H1 (cell line): ENCODE measurements at regions of chr19 and their contacts with region 1.

Region 1: GRCh38 chr19:35352448-35353304 is 5.0 kb downstream of the FFAR1 start:
- DNase-seq: peak; percentile 33 to 77
- H3K4me3 ChIP-seq: no peak overlapping the region
- H3K27ac ChIP-seq: no peak overlapping the region
- H3K4me1 ChIP-seq: peaks cover 0 to 2% (median 0%) of the 10 kb centered on the region in 4 experiments; a peak in 2 of 7 replicates
- H3K27me3 ChIP-seq: no peaks in the 10 kb centered on the region
- CTCF ChIP-seq: peak; percentile 77 to 95 (median 93)
- EP300 ChIP-seq: no peak
- POLR2A ChIP-seq: no peak
- RAD21 ChIP-seq: peak; percentile 92 to 95

Region 2: GRCh38 chr19:35262101-35262761 is 90.4 kb before region 1 on chr19:
- CTCF ChIA-PET with region 1: interaction called, 12 read pairs
- POLR2A ChIA-PET with region 1: no interaction called
- DNase-seq: no peak
- H3K4me3 ChIP-seq: no peak overlapping the region
- H3K27ac ChIP-seq: no peak overlapping the region
- H3K4me1 ChIP-seq: peaks cover 0 to 9% (median 4%) of the 10 kb centered on the region in 4 experiments; a peak in 5 of 7 replicates
- H3K27me3 ChIP-seq: no peaks in the 10 kb centered on the region
- CTCF ChIP-seq: no peak
- EP300 ChIP-seq: no peak
- POLR2A ChIP-seq: no peak; a peak in 1 of 3 replicates
- RAD21 ChIP-seq: no peak

Region 3: DNA sequence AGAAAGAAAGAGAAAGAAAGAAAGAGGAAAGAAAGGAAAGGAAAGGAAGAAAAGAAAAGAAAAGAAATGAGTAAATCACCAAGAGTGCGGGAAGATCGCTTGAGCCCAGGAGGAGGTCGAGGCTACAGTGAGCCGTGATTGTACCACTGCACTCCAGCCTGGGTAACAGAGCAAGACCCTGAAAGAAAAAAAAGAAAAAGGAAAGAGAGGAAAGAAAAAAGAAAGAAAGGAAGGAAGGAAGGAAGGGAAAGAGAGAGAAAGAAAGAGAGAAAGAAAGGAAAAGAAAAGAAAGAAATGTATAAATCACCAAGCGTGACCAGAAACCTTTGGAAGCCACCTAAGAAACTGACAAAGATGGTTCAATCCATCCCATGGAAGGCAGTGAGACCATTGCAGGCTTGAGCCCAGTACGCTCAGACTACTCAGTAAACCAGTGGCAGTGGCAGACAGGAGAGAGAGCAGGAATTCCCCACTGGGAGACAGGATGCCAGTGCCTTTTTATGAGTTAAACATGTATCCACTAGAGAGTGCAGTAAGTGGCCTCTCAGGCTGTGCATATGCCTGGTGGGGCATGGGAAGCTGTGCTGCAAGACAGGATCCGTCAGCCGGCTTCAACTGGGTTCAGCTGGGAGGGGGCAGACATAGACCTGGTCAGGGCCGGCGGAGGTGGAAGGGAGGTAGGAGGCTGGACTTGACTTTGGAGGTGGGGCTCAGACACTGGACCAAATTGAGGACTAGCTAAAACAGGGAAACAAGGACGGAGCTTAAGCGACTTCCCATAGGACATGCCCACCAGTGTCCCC is 23.0 kb after region 1 on chr19:
- CTCF ChIA-PET with region 1: interaction called, 16 read pairs
- POLR2A ChIA-PET with region 1: no interaction called
- DNase-seq: no peak
- H3K4me3 ChIP-seq: no peak overlapping the region
- H3K27ac ChIP-seq: no peak overlapping the region
- H3K4me1 ChIP-seq: no peaks in the 10 kb centered on the region
- H3K27me3 ChIP-seq: peaks cover 0 to 2% (median 0%) of the 10 kb centered on the region in 4 experiments; a peak in 1 of 7 replicates
- CTCF ChIP-seq: no peak
- EP300 ChIP-seq: no peak
- POLR2A ChIP-seq: no peak
- RAD21 ChIP-seq: no peak

Region 4: GRCh38 chr19:35414442-35414841 is 61.8 kb after region 1 on chr19:
- CTCF ChIA-PET with region 1: no interaction called
- POLR2A ChIA-PET with region 1: no interaction called
- DNase-seq: no peak
- H3K4me3 ChIP-seq: no peak overlapping the region
- H3K27ac ChIP-seq: no peak overlapping the region
- H3K4me1 ChIP-seq: no peaks in the 10 kb centered on the region
- H3K27me3 ChIP-seq: no peaks in the 10 kb centered on the region
- CTCF ChIP-seq: no peak
- EP300 ChIP-seq: no peak
- POLR2A ChIP-seq: no peak
- RAD21 ChIP-seq: no peak

Region 5: DNA sequence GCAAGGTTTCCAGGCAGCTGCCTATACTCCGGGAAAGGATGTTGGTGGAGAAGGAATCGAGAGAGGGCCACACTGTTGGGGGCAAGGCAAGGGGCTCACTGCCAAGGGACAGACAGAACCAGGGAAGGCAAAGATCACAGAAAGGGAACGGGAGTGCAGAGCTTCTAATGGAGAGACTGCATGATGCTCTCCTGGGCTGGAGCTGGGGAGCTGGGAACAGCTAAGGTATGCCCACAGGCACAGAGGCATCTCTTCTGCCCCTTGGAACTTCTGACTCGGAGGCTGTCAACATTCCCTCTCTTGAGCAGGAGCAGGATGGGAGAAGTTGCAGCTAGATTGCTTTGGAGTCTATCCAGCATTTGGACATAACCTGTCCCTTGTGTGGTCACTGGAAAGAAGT is 73.0 kb after region 1 on chr19:
- CTCF ChIA-PET with region 1: interaction called, 12 read pairs
- POLR2A ChIA-PET with region 1: no interaction called
- DNase-seq: no peak
- H3K4me3 ChIP-seq: no peak overlapping the region
- H3K27ac ChIP-seq: no peak overlapping the region
- H3K4me1 ChIP-seq: no peaks in the 10 kb centered on the region
- H3K27me3 ChIP-seq: no peaks in the 10 kb centered on the region
- CTCF ChIP-seq: no peak
- EP300 ChIP-seq: no peak
- POLR2A ChIP-seq: no peak
- RAD21 ChIP-seq: no peak

Region 6: DNA sequence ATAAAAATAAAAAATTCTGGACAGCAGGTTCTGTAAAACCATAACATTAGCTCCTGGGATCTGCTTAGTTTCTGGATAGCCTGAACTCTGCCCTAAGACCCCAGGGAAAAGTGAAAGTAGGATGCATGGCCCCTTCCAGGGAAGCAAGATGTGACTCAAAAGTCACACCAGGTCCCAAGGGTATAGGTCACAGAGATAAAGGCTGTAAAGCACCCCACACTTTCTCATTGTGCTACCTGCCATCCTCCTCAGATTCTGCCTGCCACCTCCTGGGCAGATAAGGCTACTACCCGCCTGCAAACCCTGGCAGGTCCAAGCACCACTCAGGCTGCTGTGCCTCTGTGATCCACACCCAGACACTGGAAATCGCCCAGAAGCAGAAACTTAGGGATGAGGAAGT is 116.0 kb after region 1 on chr19:
- CTCF ChIA-PET with region 1: interaction called, 51 read pairs
- POLR2A ChIA-PET with region 1: interaction called, 3 read pairs
- DNase-seq: no peak
- H3K4me3 ChIP-seq: no peak overlapping the region
- H3K27ac ChIP-seq: no peak overlapping the region
- H3K4me1 ChIP-seq: no peaks in the 10 kb centered on the region
- H3K27me3 ChIP-seq: no peaks in the 10 kb centered on the region
- CTCF ChIP-seq: peak; percentile 83 to 84 (median 84)
- EP300 ChIP-seq: no peak
- POLR2A ChIP-seq: no peak
- RAD21 ChIP-seq: peak; percentile 80 to 88

Region 7: DNA sequence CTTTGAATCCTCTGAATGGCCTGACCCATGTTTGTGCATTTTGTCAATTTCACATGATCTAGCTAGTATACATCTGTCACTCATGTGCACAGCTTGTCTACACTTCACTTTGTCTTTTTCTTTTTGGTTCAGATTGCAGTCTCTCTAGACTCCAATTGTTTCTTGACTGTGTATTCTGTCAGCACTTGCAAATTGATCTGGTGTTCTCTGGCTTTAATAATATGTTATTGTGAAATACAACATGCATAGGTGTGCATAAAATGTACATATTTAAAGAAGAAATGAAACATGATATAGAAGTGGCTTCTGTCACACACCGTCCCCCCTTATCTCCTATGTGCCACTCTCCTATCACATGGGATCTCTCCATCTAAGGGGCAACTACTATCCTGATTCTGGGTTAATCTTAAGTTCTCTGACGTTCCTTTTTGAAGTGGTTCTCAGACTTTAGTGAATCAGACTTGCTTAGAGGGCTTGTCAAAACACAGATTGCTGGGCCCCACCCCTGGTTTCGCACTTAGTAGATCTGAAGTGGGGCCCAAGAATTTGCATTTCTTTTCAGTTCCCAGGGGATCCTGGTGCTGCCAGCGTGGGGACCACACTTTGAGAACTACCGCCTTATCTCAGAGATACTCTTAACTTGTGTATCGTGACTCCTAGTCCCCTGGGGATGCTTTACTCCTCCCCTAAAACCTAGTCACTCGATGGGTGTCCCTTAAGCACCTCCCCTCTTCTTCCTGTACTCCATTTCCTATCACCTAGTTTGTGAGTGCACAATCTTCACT is 131.8 kb after region 1 on chr19:
- CTCF ChIA-PET with region 1: interaction called, 22 read pairs
- POLR2A ChIA-PET with region 1: interaction called, 3 read pairs
- DNase-seq: no peak
- H3K4me3 ChIP-seq: no peak overlapping the region
- H3K27ac ChIP-seq: no peak overlapping the region
- H3K4me1 ChIP-seq: no peaks in the 10 kb centered on the region
- H3K27me3 ChIP-seq: no peaks in the 10 kb centered on the region; a peak in 1 of 7 replicates
- CTCF ChIP-seq: no peak
- EP300 ChIP-seq: no peak
- POLR2A ChIP-seq: no peak
- RAD21 ChIP-seq: no peak